ENCODE measurements at regions of chr3 and their contacts with region 1.

Region 1: GRCh38 chr3:134212906-134213665 is 37.6 kb downstream of the RYK start:
- DNase-seq: peak; percentile 89
- H3K4me3 Mint-ChIP-seq: no peak overlapping the region
- H3K27ac Mint-ChIP-seq: no peak overlapping the region
- H3K4me1 Mint-ChIP-seq: peaks cover 9% of the 10 kb centered on the region
- H3K27me3 Mint-ChIP-seq: peaks cover 3% of the 10 kb centered on the region

Region 2: DNA sequence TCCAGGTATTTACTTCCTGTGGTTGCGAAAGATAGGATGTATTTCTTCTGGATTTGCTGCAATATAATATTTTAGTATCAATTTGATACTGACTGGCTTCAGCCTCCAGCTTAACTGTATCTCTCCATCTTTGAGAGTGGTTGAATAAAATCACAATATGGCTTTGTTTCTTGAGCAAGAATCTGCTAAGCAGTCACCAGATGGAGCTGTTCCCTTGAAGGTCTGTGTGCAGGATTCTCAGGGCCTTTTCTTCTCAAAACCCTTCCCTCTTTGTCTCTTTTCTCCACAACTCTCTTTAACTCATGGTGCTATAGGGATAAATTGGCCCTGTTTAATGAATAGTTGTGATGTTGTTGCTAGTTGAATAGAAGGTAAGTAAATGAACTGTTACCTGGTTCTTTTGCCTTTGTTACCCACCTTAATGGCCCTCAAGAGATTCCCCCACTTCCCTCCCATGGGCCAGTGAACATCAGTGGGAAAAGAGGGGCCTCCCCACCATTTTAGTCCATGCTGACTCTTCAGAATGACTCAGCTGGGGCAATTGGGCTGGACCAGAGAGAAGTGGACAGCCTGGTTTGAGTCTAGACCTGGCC is 282.6 kb before region 1 on chr3:
- CTCF ChIA-PET with region 1: interaction called, 20 read pairs
- DNase-seq: no peak
- H3K4me3 Mint-ChIP-seq: no peak overlapping the region
- H3K27ac Mint-ChIP-seq: no peak overlapping the region
- H3K4me1 Mint-ChIP-seq: peaks cover 6% of the 10 kb centered on the region
- H3K27me3 Mint-ChIP-seq: peaks cover 54% of the 10 kb centered on the region

Region 3: DNA sequence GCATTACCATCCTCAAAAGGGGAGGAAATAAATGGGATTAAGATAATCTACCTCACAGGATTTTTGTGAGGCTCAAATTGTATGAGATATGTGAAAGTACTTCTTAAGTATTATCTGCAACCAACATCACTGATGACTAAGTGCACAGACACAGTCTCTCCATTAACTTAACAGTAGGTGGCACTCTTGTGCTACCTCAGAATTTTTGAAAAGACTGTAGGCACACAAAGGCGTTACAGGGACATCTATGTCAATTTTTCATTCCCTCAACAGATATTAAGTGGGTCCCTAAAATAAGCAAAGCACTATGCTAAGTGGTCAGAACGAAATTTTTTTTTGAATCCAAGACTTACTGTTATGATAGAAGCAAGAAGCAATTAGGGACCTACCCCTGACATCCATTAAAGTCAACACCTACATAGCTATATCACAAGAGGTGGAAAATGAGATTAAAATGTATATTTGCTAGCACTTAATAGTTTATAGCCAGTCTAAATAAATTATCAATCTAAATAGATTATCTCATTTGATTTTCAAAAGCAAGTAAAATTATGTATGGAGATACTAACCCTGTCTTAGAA is 15.3 kb before region 1 on chr3:
- CTCF ChIA-PET with region 1: interaction called, 28 read pairs
- DNase-seq: no peak
- H3K4me3 Mint-ChIP-seq: no peak overlapping the region
- H3K27ac Mint-ChIP-seq: no peak overlapping the region
- H3K4me1 Mint-ChIP-seq: no peaks in the 10 kb centered on the region
- H3K27me3 Mint-ChIP-seq: no peaks in the 10 kb centered on the region

Region 4: DNA sequence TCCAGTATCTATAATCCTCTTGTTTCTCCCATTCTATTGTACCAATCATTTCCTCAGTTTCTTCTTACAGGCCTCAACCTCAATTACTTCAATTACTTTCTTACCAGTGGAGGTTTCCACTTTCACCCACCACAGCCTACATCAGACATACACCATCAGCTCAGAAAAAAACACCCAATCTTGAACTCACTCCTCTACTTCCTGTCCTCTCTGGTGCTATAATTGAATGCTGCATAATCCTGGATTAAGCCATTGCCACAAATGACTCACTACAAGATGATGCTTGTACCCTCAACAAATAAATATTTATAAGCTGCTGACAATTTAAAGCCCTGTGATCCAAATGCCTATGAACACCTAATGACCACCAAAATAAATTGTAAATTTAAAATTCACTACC is 19.1 kb after region 1 on chr3:
- CTCF ChIA-PET with region 1: interaction called, 11 read pairs
- DNase-seq: no peak
- H3K4me3 Mint-ChIP-seq: no peak overlapping the region
- H3K27ac Mint-ChIP-seq: no peak overlapping the region
- H3K4me1 Mint-ChIP-seq: peaks cover 17% of the 10 kb centered on the region
- H3K27me3 Mint-ChIP-seq: peaks cover 4% of the 10 kb centered on the region

Region 5: GRCh38 chr3:134344560-134344959 is 131.5 kb after region 1 on chr3:
- CTCF ChIA-PET with region 1: no interaction called
- DNase-seq: no peak
- H3K4me3 Mint-ChIP-seq: no peak overlapping the region
- H3K27ac Mint-ChIP-seq: no peak overlapping the region
- H3K4me1 Mint-ChIP-seq: no peaks in the 10 kb centered on the region
- H3K27me3 Mint-ChIP-seq: peaks cover 10% of the 10 kb centered on the region

Region 6: DNA sequence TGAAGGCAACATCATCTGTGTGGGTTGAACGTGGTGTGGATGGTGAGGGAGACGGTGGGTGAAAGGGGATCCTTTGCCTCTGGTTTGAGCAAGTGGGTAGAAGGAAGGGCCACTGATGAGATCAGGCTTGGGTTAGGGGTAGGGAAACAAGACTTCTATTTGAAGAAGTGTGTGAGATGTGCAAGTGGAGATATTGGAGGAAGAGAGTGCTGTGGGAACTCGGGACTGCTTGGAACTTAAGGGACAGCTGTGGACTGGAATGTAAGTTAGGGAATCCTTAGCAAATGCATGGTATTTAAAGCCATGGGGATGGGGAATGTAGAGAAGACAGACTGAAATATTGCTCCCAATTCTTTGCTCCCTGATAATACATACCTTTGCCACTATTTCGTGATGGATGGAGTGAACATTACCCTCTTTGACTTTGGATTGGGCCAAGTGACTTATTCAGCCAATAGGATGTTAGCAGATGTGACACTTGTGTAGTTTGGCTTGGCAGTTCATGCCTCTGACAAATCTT is 191.3 kb after region 1 on chr3:
- CTCF ChIA-PET with region 1: no interaction called
- DNase-seq: no peak
- H3K4me3 Mint-ChIP-seq: no peak overlapping the region
- H3K27ac Mint-ChIP-seq: no peak overlapping the region
- H3K4me1 Mint-ChIP-seq: no peaks in the 10 kb centered on the region
- H3K27me3 Mint-ChIP-seq: peaks cover 54% of the 10 kb centered on the region

Region 7: DNA sequence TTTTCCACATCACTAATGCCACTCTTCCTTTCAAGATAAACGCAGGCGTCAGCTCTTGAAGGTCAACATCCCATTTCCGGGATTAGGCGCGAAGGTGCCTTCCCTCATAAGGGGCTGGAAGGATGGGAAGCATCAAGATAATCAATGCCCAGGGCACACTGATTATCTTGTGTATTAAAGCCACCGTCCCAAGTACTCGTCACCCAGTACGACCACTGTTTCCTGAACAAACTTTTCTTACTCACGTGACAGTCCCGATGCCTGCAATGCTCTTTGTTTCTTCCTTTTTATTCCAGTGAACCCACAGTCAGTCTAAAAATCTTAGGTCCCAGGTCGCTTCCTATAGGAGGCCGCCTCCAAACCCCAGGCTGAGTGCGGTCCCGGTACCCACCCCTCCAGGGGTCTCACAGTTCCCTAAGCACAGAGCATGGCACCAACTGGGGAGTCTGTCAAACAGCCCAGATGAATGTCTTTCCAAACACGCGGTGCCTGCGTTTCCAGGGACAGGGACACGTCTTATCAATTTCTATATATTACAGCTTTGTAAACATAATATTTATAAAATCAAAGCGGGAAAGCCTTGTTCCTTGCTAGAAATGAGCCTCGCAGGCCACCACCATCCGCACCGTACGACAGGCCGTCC is 272.1 kb after region 1 on chr3:
- CTCF ChIA-PET with region 1: interaction called, 18 read pairs
- DNase-seq: peak; percentile 29
- H3K4me3 Mint-ChIP-seq: peak overlapping the region; percentile 92
- H3K27ac Mint-ChIP-seq: peak overlapping the region; percentile 98
- H3K4me1 Mint-ChIP-seq: peaks cover 49% of the 10 kb centered on the region
- H3K27me3 Mint-ChIP-seq: peaks cover 6% of the 10 kb centered on the region

Measured in activated naive CD4-positive, alpha-beta T cell treated with anti-CD3 and anti-CD28 coated beads, Interleukin-2, amount 10 ng/mL, durations not matched to agents 7 days and 5 days (primary cell).